Caco-2 (cell line): ENCODE measurements at regions of chr9 and their contacts with region 1.

Region 1: GRCh38 chr9:81656004-81656403 is 33.3 kb downstream of the TLE1 start:
- DNase-seq: no peak
- H3K4me3 ChIP-seq: no peak overlapping the region
- H3K4me3 Mint-ChIP-seq: no peak overlapping the region
- H3K27ac Mint-ChIP-seq: no peak overlapping the region
- H3K4me1 ChIP-seq: peaks cover 5% of the 10 kb centered on the region; the same call in 1 of the 2 replicates
- H3K4me1 Mint-ChIP-seq: no peaks in the 10 kb centered on the region
- H3K27me3 ChIP-seq: no peaks in the 10 kb centered on the region
- H3K27me3 Mint-ChIP-seq: no peaks in the 10 kb centered on the region
- CTCF ChIP-seq: no peak

Region 2: GRCh38 chr9:81529556-81530195 is 126.3 kb before region 1 on chr9:
- CTCF ChIA-PET with region 1: no interaction called
- POLR2A ChIA-PET with region 1: no interaction called
- intact Hi-C with region 1: loop called (anchors 10 kb)
- DNase-seq: no peak
- H3K4me3 ChIP-seq: no peak overlapping the region
- H3K4me3 Mint-ChIP-seq: no peak overlapping the region
- H3K27ac Mint-ChIP-seq: no peak overlapping the region
- H3K4me1 ChIP-seq: no peaks in the 10 kb centered on the region
- H3K4me1 Mint-ChIP-seq: peaks cover 8% of the 10 kb centered on the region
- H3K27me3 ChIP-seq: no peaks in the 10 kb centered on the region
- H3K27me3 Mint-ChIP-seq: no peaks in the 10 kb centered on the region
- CTCF ChIP-seq: no peak

Region 3: DNA sequence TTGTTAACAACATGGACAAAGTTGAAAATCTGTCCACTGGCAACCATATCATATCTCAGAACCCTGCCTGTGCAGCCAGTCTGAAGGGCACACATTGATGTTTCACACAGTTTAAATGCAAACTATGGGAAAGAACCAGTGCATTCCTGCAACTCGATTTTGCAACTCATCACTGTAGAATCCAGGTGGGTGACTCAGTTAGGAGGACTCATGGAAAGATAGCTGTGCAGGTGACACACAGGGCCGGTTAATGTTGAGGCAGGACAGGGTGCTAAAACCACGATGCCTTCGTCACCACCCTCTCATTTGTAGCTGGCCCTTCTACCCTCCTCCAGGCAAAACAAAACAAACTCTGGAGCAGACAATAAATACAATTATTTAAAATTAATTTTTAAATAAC is 29.5 kb before region 1 on chr9:
- CTCF ChIA-PET with region 1: no interaction called
- POLR2A ChIA-PET with region 1: no interaction called
- intact Hi-C with region 1: loop called (anchors 1 kb)
- DNase-seq: peak in 1 of 2 experiments; percentile 2
- H3K4me3 ChIP-seq: no peak overlapping the region
- H3K4me3 Mint-ChIP-seq: no peak overlapping the region
- H3K27ac Mint-ChIP-seq: no peak overlapping the region
- H3K4me1 ChIP-seq: no peaks in the 10 kb centered on the region
- H3K4me1 Mint-ChIP-seq: no peaks in the 10 kb centered on the region
- H3K27me3 ChIP-seq: no peaks in the 10 kb centered on the region
- H3K27me3 Mint-ChIP-seq: no peaks in the 10 kb centered on the region
- CTCF ChIP-seq: no peak

Region 4: GRCh38 chr9:81632599-81632998 is 23.4 kb before region 1 on chr9:
- CTCF ChIA-PET with region 1: no interaction called
- POLR2A ChIA-PET with region 1: no interaction called
- intact Hi-C with region 1: loop called (anchors 1 kb)
- DNase-seq: no peak
- H3K4me3 ChIP-seq: no peak overlapping the region
- H3K4me3 Mint-ChIP-seq: no peak overlapping the region
- H3K27ac Mint-ChIP-seq: no peak overlapping the region
- H3K4me1 ChIP-seq: no peaks in the 10 kb centered on the region
- H3K4me1 Mint-ChIP-seq: no peaks in the 10 kb centered on the region
- H3K27me3 ChIP-seq: no peaks in the 10 kb centered on the region
- H3K27me3 Mint-ChIP-seq: no peaks in the 10 kb centered on the region
- CTCF ChIP-seq: no peak

Region 5: DNA sequence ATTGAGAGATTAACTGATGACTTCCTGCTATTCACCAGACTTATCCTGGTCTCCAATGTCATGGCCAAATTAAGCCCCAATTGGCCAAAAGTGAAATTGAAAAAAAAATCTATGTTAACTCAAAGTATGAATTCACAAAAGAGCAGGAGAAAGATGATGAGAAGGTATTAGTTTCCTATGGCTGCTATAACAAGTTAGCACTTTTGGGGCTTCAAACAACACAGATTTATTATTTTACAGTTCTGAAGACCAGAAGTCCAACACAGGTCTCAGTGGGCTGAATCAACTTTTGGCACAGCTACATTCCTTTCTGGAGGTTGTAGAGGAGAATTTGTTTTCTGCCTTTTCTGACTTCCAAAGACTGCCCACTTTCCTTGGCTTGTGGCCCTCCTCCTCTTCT is 111.9 kb after region 1 on chr9:
- CTCF ChIA-PET with region 1: no interaction called
- POLR2A ChIA-PET with region 1: no interaction called
- intact Hi-C with region 1: no loop called
- DNase-seq: no peak
- H3K4me3 ChIP-seq: no peak overlapping the region
- H3K4me3 Mint-ChIP-seq: no peak overlapping the region
- H3K27ac Mint-ChIP-seq: no peak overlapping the region
- H3K4me1 ChIP-seq: peaks cover 4% of the 10 kb centered on the region; the same call in 1 of the 2 replicates
- H3K4me1 Mint-ChIP-seq: no peaks in the 10 kb centered on the region
- H3K27me3 ChIP-seq: no peaks in the 10 kb centered on the region
- H3K27me3 Mint-ChIP-seq: no peaks in the 10 kb centered on the region
- CTCF ChIP-seq: no peak